GM10248 (cell line): ENCODE measurements at regions of chr1 and their contacts with region 1.

Region 1: DNA sequence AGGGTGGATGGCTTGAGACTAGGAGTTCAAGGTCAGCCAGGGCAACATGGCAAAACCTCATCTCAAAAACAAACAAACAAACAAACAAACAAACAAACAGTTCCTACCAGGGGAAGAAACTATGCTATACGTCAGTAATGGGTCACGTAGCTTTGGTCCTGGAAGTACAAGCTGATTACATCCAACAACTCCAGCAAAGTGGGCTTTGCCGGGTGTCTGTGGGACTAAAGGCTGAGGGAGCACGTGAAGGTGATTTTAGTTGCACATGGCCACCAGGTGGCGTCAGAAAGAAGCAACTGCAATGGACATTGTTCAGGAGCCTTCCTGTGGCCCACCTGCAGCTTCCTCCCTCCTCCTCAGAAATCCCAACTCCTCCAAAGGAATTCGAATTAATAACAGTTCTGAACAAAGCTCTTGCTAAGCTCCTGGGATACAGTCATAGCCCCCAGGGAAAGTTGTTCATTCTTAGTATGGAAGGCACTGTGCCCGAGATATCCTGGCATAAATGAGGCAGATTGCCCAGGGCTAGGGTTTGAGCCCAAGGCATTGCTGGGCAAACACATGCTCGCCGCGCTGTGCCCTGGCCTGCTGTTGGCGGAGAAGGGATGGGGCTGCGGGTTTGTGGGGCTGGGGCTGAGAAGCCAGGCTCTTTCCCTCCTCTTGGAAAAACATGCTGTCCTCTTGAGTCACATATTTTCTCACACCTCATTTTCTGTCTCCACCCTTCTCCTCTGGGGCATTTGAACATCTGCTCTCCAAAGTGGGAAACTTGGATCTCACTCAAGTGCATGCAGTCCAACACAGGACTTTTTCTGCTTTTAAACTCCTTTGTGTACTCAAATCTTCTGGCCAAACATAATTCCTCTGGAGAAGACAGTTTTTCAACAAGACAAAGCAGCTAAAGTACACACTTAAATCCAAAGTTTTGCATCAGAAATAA is 28.6 kb downstream of the AKNAD1 start:
- DNase-seq: peak; percentile 84
- CTCF ChIP-seq: peak; percentile 67

Region 2: DNA sequence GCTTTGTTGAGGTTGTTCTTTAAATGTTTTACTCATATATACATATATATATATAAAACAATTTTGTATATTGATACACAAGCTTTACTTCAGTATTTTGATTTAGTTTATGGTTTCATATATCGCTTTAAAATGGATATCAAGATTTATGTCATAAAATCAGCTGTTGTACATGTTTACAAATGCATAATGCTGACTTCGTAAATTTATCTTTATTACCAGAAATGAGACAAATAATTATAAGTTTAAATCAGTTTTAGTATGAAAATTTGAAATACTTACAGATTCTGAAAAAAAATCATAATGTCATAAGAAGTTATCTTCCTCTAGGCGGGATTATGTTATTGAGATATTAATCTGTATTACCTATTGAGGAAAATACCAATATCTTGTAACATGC is 74.9 kb before region 1 on chr1:
- CTCF ChIA-PET with region 1: no interaction called
- POLR2A ChIA-PET with region 1: no interaction called
- DNase-seq: no peak
- CTCF ChIP-seq: no peak

Region 3: DNA sequence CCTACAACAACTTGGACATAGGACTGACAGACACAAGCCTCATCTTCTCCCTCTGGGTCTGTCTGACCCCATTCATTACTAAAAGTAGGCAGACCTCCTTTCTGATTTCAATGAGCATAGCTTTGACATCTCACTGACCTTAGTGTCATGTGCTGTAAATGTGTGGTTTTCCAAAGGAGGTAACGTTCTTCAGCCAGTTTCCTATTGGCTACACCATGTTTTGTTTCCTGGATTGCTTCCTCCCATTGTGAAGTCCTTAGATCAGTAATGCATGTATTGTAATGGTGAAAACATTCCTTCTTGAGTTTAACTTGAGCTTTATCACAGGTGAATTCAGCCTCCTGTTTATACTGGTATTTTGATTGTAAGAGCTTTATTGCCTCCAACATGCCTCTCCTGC is 61.2 kb before region 1 on chr1:
- CTCF ChIA-PET with region 1: no interaction called
- POLR2A ChIA-PET with region 1: no interaction called
- DNase-seq: no peak
- CTCF ChIP-seq: no peak

Region 4: GRCh38 chr1:108816049-108816893 is 12.0 kb before region 1 on chr1:
- CTCF ChIA-PET with region 1: interaction called, 16 read pairs
- POLR2A ChIA-PET with region 1: no interaction called
- DNase-seq: no peak
- CTCF ChIP-seq: no peak

Region 5: DNA sequence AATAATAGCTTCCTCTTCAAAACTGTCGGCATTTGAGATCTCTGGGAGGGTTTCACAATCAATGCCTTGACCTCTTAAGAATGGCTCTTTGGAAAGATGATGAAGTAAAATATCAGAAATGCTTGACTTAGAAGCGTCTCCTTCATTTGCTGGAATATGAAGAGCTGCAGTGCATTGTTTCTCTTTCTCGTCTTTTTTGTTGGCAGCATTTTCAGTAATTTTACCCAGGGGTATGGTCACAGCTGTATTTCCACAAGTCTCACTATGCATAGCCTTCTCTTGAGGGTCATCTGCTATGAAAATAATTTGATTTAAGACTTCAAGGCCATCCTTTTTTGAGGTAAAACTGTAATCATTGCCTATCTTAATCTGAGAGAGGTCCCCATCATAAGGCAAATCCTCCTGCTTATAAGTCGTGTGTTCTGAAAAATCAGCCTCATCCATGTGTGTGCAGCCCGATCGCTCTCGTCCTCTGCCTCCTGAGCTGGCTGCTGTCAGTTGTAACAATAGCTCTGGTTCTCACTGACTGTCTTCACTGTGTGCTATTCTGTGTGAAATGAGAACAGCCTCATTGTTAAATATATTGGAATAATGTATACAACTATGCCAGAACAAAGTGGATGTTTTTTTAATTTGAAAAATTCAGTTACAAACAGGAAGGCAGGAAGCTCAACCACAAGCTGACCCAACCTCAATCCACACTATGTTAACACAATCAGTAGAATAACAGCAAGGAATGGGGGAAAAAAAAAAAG is 24.1 kb after region 1 on chr1:
- CTCF ChIA-PET with region 1: interaction called, 21 read pairs
- POLR2A ChIA-PET with region 1: no interaction called
- DNase-seq: no peak
- CTCF ChIP-seq: no peak

Region 6: GRCh38 chr1:108882837-108883236 is 54.5 kb after region 1 on chr1:
- CTCF ChIA-PET with region 1: interaction called, 21 read pairs
- POLR2A ChIA-PET with region 1: no interaction called
- DNase-seq: no peak
- CTCF ChIP-seq: no peak

Region 7: GRCh38 chr1:108897865-108898720 is 69.8 kb after region 1 on chr1:
- CTCF ChIA-PET with region 1: interaction called, 300 read pairs
- POLR2A ChIA-PET with region 1: no interaction called
- DNase-seq: peak; percentile 44
- CTCF ChIP-seq: peak; percentile 74